ENCODE measurements at regions of chr13 and their contacts with region 1.

Region 1: DNA sequence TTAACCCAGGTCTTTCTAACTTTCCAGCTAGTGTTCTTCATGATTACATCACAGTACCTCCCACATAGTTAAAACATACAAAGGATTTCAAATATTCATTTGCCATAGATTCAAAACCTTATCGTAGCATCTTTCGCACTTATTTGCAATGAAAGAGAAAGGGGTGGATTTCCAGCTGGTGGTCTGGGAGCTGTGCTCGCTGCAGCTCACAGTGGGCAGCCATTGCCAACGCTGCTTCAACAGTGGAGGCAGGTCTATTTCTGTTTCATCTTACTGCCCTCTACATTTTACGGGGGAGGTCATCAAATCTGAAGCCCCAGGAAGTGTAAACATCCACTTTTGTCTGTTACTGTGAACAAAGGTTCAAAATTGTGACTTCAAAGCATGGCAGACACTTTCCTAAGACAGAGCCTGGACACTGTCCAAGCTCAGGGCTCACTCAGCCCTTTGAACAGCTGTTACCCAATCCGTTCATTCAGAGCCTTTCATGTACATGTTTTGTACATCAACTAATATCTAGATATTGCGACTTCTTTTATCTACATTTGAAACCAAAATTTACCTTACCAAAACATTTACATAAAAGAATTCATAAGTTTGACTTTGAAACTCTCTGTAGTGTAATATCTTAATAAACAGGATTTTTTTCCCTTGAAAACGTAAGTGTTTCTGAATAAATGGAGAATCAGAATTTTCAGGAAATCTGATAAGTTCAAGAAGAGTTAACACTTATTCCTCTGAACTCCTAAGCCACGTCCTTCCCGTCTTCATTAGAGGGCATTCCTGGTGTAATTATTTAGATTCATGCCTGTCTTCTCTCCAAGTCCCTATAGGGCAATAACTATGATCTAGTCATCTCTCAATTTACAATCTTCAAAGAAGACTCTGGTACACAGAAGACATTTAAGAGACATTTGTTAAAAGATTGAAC is 25.1 kb downstream of the STARD13 start:
- DNase-seq: peak; percentile 70
- ATAC-seq: no peak
- H3K4me3 ChIP-seq: no peak overlapping the region
- H3K27ac ChIP-seq: peak overlapping the region; percentile 40
- H3K4me1 ChIP-seq: peaks cover 48% of the 10 kb centered on the region
- H3K27me3 ChIP-seq: no peaks in the 10 kb centered on the region
- CTCF ChIP-seq: no peak
- POLR2A ChIP-seq: no peak
- RAD21 ChIP-seq: no peak

Region 2: DNA sequence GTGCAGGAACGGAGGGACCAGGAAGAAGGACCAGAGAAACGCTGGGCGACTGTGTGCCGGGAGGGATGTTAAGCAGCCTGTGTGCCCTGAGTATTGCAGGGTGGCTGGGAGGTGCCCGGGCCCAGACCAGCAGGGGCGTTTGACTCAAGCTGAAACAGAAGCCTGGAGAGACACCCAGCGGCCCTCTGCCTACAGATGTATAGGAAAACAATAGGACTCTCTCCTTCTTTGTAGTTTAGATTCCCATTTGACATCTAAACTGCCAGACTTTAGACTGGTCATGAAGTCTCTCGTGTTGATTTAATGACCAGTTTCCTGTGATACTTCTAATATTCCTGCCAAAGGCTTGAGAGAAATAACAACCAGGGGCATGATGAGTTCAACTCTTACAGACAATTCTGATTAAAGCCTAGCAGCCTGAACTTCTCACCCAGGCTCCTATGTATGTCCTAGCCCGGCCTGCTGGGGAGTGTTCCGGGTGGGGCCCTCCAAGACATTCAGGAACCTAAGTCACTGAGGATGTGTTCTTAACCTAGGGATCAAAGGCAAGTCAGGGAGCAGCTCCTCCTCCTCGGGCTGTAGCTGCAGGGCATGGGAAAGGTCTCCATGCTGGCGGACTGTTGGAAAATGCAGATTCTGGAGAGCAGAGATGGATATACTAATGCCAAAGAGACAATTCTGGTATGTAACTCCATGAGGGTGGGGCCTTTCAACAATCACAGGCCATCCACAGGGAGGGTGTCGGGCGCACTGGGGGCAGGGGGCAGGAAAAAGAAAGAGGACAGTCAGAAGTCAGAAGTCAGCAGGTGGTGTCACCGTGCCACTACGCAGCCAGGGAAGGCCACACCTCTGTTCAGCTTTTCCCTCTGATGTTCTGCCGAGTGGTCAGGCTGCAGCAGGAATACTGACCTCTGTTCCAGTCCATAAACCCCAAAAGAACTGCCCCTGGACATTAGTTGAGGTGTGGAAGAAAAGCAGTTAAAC is 106.7 kb before region 1 on chr13:
- CTCF ChIA-PET with region 1: no interaction called
- POLR2A ChIA-PET with region 1: no interaction called
- dilution Hi-C with region 1: no loop called
- in situ Hi-C with region 1: no loop called
- intact Hi-C with region 1: no loop called
- DNase-seq: peak; percentile 38
- ATAC-seq: no peak; the same call in 1 of the 2 replicates
- H3K4me3 ChIP-seq: no peak overlapping the region
- H3K27ac ChIP-seq: peak overlapping the region; percentile 5; the same call in 1 of the 2 replicates
- H3K4me1 ChIP-seq: peaks cover 17% of the 10 kb centered on the region
- H3K27me3 ChIP-seq: no peaks in the 10 kb centered on the region
- CTCF ChIP-seq: no peak
- POLR2A ChIP-seq: no peak
- RAD21 ChIP-seq: no peak

Region 3: GRCh38 chr13:33426131-33426530 is 165.7 kb after region 1 on chr13:
- CTCF ChIA-PET with region 1: interaction called, 13 read pairs
- POLR2A ChIA-PET with region 1: no interaction called
- dilution Hi-C with region 1: no loop called
- in situ Hi-C with region 1: no loop called
- intact Hi-C with region 1: no loop called
- DNase-seq: no peak
- ATAC-seq: no peak
- H3K4me3 ChIP-seq: no peak overlapping the region
- H3K27ac ChIP-seq: no peak overlapping the region
- H3K4me1 ChIP-seq: no peaks in the 10 kb centered on the region
- H3K27me3 ChIP-seq: no peaks in the 10 kb centered on the region
- CTCF ChIP-seq: no peak
- POLR2A ChIP-seq: no peak
- RAD21 ChIP-seq: no peak

Measured in IMR-90 (cell line).